Right ventricle myocardium inferior (tissue), 1 donor: ENCODE measurements at regions of chr11 and their contacts with region 1.

Region 1: DNA sequence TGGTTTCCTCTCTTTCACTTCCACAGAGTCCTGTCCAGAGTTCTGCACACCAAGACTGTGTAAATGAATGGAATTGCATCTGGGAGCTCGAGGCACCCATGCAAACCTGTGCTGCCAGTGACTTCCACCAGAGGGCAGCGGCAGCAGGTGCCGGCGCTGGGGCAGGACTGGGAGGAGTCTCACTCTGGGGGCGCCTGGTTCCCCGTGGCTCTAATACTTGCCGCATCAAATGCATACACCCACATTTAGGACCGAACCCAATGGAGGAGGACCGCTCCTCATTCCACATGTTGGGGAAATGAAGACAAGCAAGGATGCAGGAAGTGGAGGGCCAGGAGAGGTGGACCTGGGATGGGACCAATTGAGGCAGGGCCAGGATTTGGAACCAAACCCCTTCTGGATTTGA is 1.1 kb upstream of the CD6 start:
- DNase-seq: peak; percentile 86
- ATAC-seq: peak; percentile 46

Region 2: DNA sequence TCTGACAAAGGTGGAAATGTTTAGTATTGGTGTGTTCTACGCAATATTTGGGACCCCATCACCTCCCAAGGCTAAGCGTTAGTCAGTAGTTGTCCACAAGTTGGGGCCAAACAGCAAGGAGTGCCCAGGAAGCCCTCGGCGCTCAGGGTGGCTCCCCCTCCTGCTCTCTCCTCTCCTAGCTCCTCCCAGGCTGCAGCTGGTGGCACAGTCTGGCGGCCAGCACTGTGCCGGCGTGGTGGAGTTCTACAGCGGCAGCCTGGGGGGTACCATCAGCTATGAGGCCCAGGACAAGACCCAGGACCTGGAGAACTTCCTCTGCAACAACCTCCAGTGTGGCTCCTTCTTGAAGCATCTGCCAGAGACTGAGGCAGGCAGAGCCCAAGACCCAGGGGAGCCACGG is 148.7 kb after region 1 on chr11:
- intact Hi-C with region 1: no loop called
- DNase-seq: no peak
- ATAC-seq: no peak

Region 3: DNA sequence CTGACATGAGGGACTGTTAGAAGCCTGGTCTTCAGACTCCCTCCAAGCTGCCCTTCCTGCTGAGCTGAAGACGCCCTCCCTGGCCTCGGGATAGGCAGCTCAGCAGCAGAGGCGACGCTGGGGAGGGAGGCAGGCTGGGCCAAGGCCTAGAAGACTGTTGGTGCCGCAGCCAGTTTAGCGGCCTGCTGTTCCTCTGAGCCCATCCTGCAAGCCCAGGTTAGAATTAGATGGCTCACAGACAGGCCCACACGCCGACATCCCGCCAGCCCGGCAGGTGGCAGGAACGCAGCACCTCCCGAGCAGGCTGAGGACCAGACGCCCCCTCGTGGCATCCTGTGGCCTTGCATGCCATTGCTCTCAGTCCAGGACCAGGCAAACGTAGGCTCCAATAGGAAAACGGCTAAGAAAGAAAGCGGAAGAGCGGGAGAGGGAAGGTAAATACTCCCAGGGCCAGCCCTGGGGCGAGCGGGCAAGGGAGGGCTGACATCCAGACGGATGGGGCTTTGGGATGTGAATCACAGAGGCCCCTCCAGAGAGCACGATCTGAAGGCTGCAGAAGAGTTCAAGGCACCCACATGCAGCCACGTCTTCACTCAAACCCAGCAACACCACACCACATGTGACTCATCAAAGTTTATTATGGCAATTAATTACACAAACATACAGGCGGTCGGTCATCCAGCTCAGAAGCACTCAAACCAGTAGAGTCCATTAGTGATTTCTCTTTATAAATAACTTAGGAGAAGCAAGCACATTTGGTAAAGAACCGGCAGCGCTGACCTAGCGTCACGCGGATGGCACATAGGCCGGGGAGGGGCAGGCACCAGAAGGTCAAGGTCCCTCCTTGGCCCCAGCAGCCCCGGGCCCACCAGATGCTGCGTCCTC is 159.5 kb after region 1 on chr11:
- intact Hi-C with region 1: loop called (anchors 2 kb)
- DNase-seq: peak; percentile 91
- ATAC-seq: peak; percentile 81

Region 4: DNA sequence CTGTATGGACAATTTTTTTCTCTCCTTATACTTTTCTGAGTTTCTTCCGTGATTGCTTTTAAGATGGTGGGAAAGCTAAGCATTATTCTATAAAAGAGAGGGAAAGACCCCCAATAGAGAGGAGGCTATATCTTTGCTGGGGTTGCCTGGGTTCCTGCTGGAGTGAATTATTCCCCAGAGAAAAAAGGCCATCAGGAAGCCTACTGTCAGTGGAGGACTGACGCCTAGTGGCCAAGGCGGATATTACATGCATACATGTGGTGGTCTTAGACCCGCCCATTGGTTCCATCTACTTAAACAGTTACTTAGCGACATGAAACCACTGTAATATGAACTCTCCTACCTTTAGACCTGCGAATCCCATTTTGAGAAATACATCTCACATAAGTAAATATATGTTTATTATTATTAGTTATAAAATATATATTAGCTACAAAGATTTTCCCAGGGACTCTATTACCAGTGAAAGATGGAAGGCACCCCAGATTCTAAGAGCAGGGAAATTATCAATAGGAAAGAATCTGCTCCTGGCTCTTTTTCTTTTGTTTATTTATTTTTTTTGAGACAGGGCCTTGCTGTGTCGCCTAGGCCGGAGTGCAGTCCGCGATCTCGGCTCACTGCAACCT is 217.2 kb after region 1 on chr11:
- intact Hi-C with region 1: loop called (anchors 2 kb)
- DNase-seq: peak; percentile 77
- ATAC-seq: peak; percentile 72